Ovary (tissue), 10 donors: ENCODE measurements at regions of chr16 and their contacts with region 1.

Region 1: GRCh38 chr16:11047057-11047456 is 102.7 kb downstream of the CLEC16A start:
- DNase-seq: no peak
- H3K4me3 ChIP-seq: no peak overlapping the region
- H3K27ac ChIP-seq: peak overlapping the region in 1 of 2 donors; percentile 67
- H3K4me1 ChIP-seq: peaks cover 4% of the 10 kb centered on the region
- H3K27me3 ChIP-seq: no peaks in the 10 kb centered on the region
- CTCF ChIP-seq: no peak
- EP300 ChIP-seq: no peak
- POLR2A ChIP-seq: no peak

Region 2: DNA sequence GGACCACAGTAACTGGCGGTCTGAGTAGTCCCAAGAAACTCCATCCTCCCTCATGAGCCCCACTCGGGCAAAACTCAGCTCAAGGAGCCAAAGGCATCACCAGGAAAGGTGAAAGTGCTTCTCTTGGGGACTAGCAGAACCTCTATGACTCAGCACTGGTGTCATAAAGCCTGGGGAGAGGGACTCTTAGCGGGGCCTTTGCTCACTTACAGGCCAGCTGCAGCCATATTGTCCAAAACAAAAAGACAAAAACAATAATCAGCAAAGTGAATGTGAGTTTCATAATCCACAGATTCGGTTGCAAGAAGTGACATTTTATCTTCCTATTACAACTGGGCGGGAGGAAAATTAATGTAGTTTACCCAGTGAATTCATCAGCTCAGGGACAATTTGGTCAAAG is 352.2 kb before region 1 on chr16 and contains the start of gene TEKT5:
- intact Hi-C with region 1: no loop called
- DNase-seq: no peak
- H3K4me3 ChIP-seq: no peak within 1 kb of the TSS
- H3K27ac ChIP-seq: no peak within 1 kb of the TSS
- H3K4me1 ChIP-seq: no peaks in the 10 kb centered on the region
- H3K27me3 ChIP-seq: no peaks in the 10 kb centered on the region
- CTCF ChIP-seq: no peak
- EP300 ChIP-seq: no peak
- POLR2A ChIP-seq: no peak
- total RNA-seq, gene TEKT5: 0.28 to 0.90 (median 0.50) TPM in 4 of 7 donors, not detected in the others

Region 3: DNA sequence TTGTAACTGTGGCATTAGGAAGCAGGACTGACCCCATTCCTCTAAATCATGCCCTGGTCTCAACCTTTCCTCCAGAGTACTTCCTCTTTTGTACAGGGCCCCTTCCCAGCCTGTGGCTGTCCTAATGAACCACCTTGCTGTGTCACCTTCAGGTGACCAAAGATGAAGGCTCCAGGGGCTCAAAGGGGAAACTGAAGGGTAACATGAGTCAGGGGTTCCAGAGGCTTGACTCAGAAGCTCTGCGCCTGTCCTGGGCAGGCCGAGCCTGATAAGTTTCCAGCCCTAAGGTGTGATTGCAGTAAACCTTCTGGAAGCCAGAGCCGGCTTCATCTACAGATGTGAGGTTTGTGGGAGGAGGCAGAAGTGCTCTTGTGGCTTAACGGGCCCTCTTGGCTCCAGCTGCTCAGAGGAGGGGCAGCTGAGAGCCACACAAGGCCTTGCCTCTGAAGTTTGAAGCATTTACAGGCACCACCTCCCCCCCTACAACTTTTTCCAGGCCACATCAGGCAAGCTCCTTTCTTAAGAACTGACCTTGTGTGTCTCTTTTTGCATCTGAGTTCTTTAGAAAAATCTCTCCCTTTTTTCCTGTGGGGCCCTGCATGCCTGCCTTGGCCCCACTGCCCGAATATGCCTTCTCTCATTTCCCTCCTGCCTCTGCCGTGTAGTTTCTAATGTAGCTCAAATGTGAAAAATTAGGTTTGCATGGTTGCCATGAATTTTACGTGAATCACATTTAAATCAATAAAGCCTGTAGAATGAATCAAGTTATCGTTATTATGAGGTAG is 47.2 kb after region 1 on chr16:
- intact Hi-C with region 1: loop called in 1 of 4 experiments (anchors 10 kb)
- DNase-seq: peak in 2 of 5 donors; percentile 29 to 50
- H3K4me3 ChIP-seq: no peak overlapping the region
- H3K27ac ChIP-seq: peak overlapping the region in 1 of 2 donors; percentile 53
- H3K4me1 ChIP-seq: peaks cover 17% of the 10 kb centered on the region
- H3K27me3 ChIP-seq: no peaks in the 10 kb centered on the region
- CTCF ChIP-seq: no peak
- EP300 ChIP-seq: no peak
- POLR2A ChIP-seq: no peak